CD8-positive, alpha-beta T cell (primary cell): ENCODE measurements at regions of chr12 and their contacts with region 1.

Region 1: DNA sequence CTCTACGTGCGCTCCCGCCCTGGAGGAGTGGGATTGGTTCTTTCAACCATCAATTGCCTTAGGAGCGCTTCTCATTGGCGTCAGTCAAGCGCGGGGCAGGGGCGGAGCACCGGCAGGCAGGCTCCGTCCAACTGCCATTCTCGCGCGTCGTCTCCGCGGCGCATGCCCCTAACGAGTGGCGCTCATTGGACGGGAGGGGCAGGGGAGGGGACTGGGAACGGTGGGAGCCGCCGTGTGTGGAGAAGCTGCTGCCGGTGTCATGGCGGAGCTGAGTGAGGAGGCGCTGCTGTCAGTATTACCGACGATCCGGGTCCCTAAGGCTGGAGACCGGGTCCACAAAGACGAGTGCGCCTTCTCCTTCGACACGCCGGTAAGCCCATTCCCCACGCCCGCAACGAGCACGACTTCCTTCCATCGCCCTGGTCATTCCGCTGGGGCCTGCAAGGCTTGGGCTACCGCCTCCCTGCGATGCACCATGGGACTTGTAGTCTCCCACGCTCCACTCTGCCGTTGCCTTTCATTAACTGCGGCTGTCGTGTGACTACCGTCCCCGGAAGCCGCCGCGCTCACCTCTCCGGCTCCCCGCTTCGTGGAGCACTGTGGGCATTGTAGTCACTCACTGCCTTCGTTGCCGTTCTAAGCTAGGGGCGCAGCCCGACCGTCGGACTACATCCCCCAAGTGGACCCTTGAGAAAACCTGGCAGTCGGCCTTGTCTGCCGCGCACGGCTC is at the start of gene USP5:
- DNase-seq: peak; percentile 94 to 100 (median 98)
- ATAC-seq: peak; percentile 75
- H3K4me3 ChIP-seq: peak within 1 kb of the TSS; percentile 88 to 89
- H3K4me3 Mint-ChIP-seq: peak within 1 kb of the TSS; percentile 95
- H3K27ac ChIP-seq: peak within 1 kb of the TSS; percentile 78 to 91
- H3K27ac Mint-ChIP-seq: peak within 1 kb of the TSS; percentile 99
- H3K4me1 ChIP-seq: peaks cover 20% of the 10 kb centered on the region
- H3K4me1 Mint-ChIP-seq: peaks cover 22% of the 10 kb centered on the region
- H3K27me3 ChIP-seq: no peaks in the 10 kb centered on the region
- H3K27me3 Mint-ChIP-seq: no peaks in the 10 kb centered on the region
- CTCF ChIP-seq: no peak
- total RNA-seq, gene USP5: 24.0 to 25.9 TPM

Region 2: GRCh38 chr12:6554168-6555017 is 297.7 kb before region 1 on chr12:
- CTCF ChIA-PET with region 1: no interaction called
- POLR2A ChIA-PET with region 1: no interaction called
- intact Hi-C with region 1: loop called in 1 of 2 experiments (anchors 2 kb)
- DNase-seq: peak; percentile 55 to 81 (median 71)
- ATAC-seq: peak; percentile 61
- H3K4me3 ChIP-seq: peak overlapping the region; percentile 70 to 96
- H3K4me3 Mint-ChIP-seq: peak overlapping the region; percentile 87
- H3K27ac ChIP-seq: no peak overlapping the region
- H3K27ac Mint-ChIP-seq: peak overlapping the region; percentile 58
- H3K4me1 ChIP-seq: peaks cover 35% of the 10 kb centered on the region
- H3K4me1 Mint-ChIP-seq: peaks cover 49% of the 10 kb centered on the region
- H3K27me3 ChIP-seq: no peaks in the 10 kb centered on the region
- H3K27me3 Mint-ChIP-seq: no peaks in the 10 kb centered on the region
- CTCF ChIP-seq: peak; percentile 50

Region 3: GRCh38 chr12:6723607-6724396 is 128.3 kb before region 1 on chr12 and contains the start of gene COPS7A:
- CTCF ChIA-PET with region 1: no interaction called
- POLR2A ChIA-PET with region 1: interaction called, 24 read pairs
- intact Hi-C with region 1: loop called in 1 of 2 experiments (anchors 1 kb)
- DNase-seq: peak; percentile 83 to 98 (median 97)
- ATAC-seq: peak; percentile 85
- H3K4me3 ChIP-seq: peak within 1 kb of the TSS; percentile 59 to 68
- H3K4me3 Mint-ChIP-seq: peak within 1 kb of the TSS; percentile 83
- H3K27ac ChIP-seq: peak within 1 kb of the TSS; percentile 67 to 92
- H3K27ac Mint-ChIP-seq: peak within 1 kb of the TSS; percentile 94
- H3K4me1 ChIP-seq: peaks cover 19% of the 10 kb centered on the region
- H3K4me1 Mint-ChIP-seq: peaks cover 27% of the 10 kb centered on the region
- H3K27me3 ChIP-seq: no peaks in the 10 kb centered on the region
- H3K27me3 Mint-ChIP-seq: no peaks in the 10 kb centered on the region
- CTCF ChIP-seq: peak; percentile 28
- total RNA-seq, gene COPS7A: 11.0 to 11.1 TPM

Region 4: GRCh38 chr12:6873094-6874014 is 21.3 kb after region 1 on chr12 and contains the start of gene SPSB2:
- CTCF ChIA-PET with region 1: interaction called, 126 read pairs
- POLR2A ChIA-PET with region 1: interaction called, 61 read pairs
- intact Hi-C with region 1: loop called (anchors 1 kb)
- DNase-seq: peak; percentile 96 to 100 (median 99)
- ATAC-seq: peak; percentile 90
- H3K4me3 ChIP-seq: peak within 1 kb of the TSS; percentile 89 to 99
- H3K4me3 Mint-ChIP-seq: peak within 1 kb of the TSS; percentile 90
- H3K27ac ChIP-seq: peak within 1 kb of the TSS; percentile 77 to 83
- H3K27ac Mint-ChIP-seq: peak within 1 kb of the TSS; percentile 90
- H3K4me1 ChIP-seq: peaks cover 44% of the 10 kb centered on the region
- H3K4me1 Mint-ChIP-seq: peaks cover 47% of the 10 kb centered on the region
- H3K27me3 ChIP-seq: no peaks in the 10 kb centered on the region
- H3K27me3 Mint-ChIP-seq: no peaks in the 10 kb centered on the region
- CTCF ChIP-seq: no peak
- total RNA-seq, gene SPSB2: 2.6 to 3.0 TPM

Region 5: DNA sequence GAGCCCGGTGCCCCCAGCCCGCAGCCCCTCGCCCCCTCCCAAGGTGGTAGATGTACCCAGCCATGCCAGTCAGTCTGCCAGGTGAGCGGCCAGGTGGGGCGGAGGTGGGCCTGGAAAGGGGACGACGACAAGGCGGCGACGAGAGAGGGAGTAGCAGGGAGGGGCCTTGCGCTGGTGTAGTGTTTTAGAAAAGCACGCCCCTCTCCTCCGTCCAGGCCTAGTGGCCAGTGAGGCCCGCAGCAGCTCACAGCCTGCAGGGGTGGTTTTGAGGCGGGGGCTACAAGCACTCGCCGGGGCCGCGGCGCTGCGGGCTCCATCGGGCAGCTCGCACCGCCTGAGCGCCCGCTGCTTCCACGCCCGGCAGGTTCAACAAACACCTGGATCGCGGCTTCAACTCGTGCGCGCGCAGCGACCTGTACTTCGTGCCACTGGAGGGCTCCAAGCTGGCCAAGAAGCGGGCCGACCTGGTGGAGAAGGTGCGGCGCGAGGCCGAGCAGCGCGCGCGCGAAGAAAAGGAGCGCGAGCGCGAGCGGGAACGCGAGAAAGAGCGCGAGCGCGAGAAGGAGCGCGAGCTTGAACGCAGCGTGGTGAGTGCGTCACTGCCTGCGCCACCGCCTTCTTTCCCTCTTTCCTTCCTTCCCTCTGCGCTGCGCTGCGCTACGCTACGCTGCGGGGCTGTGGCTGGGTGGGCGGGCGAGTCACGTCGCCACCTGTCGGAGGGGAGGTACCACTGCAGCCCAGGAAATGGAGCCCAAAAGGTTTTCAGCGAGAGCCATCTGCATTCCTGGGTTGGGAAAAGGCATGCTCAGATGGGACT is 85.6 kb after region 1 on chr12:
- CTCF ChIA-PET with region 1: interaction called, 6 read pairs
- POLR2A ChIA-PET with region 1: interaction called, 9 read pairs
- intact Hi-C with region 1: loop called in 1 of 2 experiments (anchors 1 kb)
- DNase-seq: peak; percentile 84 to 99 (median 92)
- ATAC-seq: peak; percentile 91
- H3K4me3 ChIP-seq: peak overlapping the region; percentile 60 to 91
- H3K4me3 Mint-ChIP-seq: peak overlapping the region; percentile 83
- H3K27ac ChIP-seq: peak overlapping the region; percentile 89 to 91
- H3K27ac Mint-ChIP-seq: peak overlapping the region; percentile 96
- H3K4me1 ChIP-seq: peaks cover 25% of the 10 kb centered on the region
- H3K4me1 Mint-ChIP-seq: peaks cover 48% of the 10 kb centered on the region
- H3K27me3 ChIP-seq: no peaks in the 10 kb centered on the region
- H3K27me3 Mint-ChIP-seq: no peaks in the 10 kb centered on the region
- CTCF ChIP-seq: peak; percentile 90

Region 6: GRCh38 chr12:7188562-7189397 is 336.7 kb after region 1 on chr12:
- CTCF ChIA-PET with region 1: no interaction called
- POLR2A ChIA-PET with region 1: no interaction called
- intact Hi-C with region 1: loop called in 1 of 2 experiments (anchors 5 kb)
- DNase-seq: peak; percentile 36 to 76 (median 63)
- ATAC-seq: peak; percentile 32
- H3K4me3 ChIP-seq: peak overlapping the region; percentile 85 to 86
- H3K4me3 Mint-ChIP-seq: peak overlapping the region; percentile 95
- H3K27ac ChIP-seq: peak overlapping the region; percentile 66 to 90
- H3K27ac Mint-ChIP-seq: peak overlapping the region; percentile 97
- H3K4me1 ChIP-seq: peaks cover 26% of the 10 kb centered on the region
- H3K4me1 Mint-ChIP-seq: peaks cover 44% of the 10 kb centered on the region
- H3K27me3 ChIP-seq: no peaks in the 10 kb centered on the region
- H3K27me3 Mint-ChIP-seq: no peaks in the 10 kb centered on the region
- CTCF ChIP-seq: peak; percentile 63

Region 7: DNA sequence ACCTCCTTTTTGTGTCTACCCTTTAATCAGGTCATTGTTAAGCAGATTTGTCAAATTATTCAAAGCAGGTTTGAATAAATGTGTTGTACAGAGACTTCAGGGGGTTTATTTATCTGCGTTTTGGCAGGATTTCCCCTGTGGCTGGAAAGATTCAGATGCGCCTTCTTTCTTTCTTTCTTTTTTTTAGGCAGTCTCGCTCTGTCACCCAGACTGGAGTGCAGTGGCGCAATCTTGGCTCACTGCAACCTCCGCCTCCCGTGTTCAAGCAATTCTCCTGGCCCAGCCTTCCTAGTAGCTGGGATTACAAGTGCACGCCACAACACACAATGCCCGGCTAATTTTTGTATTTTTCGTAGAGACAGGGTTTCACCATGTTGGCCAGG is 906.7 kb after region 1 on chr12:
- CTCF ChIA-PET with region 1: no interaction called
- POLR2A ChIA-PET with region 1: no interaction called
- intact Hi-C with region 1: no loop called
- DNase-seq: no peak
- ATAC-seq: no peak
- H3K4me3 ChIP-seq: no peak overlapping the region
- H3K4me3 Mint-ChIP-seq: no peak overlapping the region
- H3K27ac ChIP-seq: no peak overlapping the region
- H3K27ac Mint-ChIP-seq: no peak overlapping the region
- H3K4me1 ChIP-seq: no peaks in the 10 kb centered on the region
- H3K4me1 Mint-ChIP-seq: no peaks in the 10 kb centered on the region
- H3K27me3 ChIP-seq: no peaks in the 10 kb centered on the region
- H3K27me3 Mint-ChIP-seq: peaks cover 2% of the 10 kb centered on the region
- CTCF ChIP-seq: no peak